OCI-LY7 (cell line): ENCODE measurements at regions of chr12 and their contacts with region 1.

Region 1: GRCh38 chr12:104456417-104456949 is at the start of gene CHST11:
- DNase-seq: peak; percentile 92
- H3K4me3 ChIP-seq: peak within 1 kb of the TSS; percentile 79
- H3K27ac ChIP-seq: peak within 1 kb of the TSS; percentile 64
- H3K4me1 ChIP-seq: peaks cover 41% of the 10 kb centered on the region
- CTCF ChIP-seq: peak; percentile 59
- total RNA-seq, gene CHST11: 35.8 and 41.6 TPM in 2 replicates

Region 2: GRCh38 chr12:104189915-104190555 is 266.4 kb before region 1 on chr12:
- CTCF ChIA-PET with region 1: no interaction called
- POLR2A ChIA-PET with region 1: no interaction called
- intact Hi-C with region 1: no loop called
- DNase-seq: no peak
- H3K4me3 ChIP-seq: no peak overlapping the region
- H3K27ac ChIP-seq: no peak overlapping the region
- H3K4me1 ChIP-seq: no peaks in the 10 kb centered on the region
- CTCF ChIP-seq: no peak

Region 3: DNA sequence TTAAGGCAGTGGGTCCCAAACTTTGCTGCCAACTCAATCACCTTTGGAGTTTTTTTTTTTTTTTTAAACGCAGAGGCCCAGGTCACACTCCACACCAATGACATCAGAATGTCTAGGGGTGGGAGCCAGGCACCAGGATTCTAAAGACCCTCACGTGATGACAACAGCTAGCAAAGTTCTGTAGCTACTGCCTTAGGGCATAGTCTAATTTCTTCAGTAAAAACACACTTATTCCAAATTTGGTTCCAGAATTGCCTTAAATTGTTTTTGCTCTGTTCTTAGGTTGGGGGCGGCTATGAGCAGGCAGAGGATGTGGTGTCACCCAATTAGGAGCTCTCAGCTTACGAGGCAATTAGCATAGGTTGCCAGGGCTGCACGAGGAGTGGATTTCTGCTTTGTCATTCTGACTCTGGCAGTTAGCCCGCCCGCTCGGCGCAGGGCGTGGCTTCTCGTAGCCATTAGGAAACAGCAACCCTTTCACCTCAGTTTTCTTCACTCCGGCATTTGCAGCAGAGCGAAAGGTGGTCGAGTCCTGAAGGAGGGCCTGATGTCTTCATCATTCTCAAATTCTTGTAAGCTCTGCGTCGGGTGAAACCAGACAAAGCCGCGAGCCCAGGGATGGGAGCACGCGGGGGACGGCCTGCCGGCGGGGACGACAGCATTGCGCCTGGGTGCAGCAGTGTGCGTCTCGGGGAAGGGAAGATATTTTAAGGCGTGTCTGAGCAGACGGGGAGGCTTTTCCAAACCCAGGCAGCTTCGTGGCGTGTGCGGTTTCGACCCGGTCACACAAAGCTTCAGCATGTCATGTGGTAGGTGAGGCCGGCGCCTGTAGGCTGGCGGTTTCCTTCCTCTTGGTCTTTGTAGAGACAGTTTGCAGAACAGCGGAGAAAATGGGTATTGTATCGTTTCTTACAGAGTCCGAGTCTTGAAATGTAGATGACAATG is 169.7 kb before region 1 on chr12:
- CTCF ChIA-PET with region 1: no interaction called
- POLR2A ChIA-PET with region 1: no interaction called
- intact Hi-C with region 1: loop called (anchors 5 kb)
- DNase-seq: peak; percentile 98
- H3K4me3 ChIP-seq: peak overlapping the region; percentile 99
- H3K27ac ChIP-seq: peak overlapping the region; percentile 95
- H3K4me1 ChIP-seq: peaks cover 27% of the 10 kb centered on the region
- CTCF ChIP-seq: 0 out of 2 replicates have a peak, but pooled peaks have one; percentile 18

Region 4: DNA sequence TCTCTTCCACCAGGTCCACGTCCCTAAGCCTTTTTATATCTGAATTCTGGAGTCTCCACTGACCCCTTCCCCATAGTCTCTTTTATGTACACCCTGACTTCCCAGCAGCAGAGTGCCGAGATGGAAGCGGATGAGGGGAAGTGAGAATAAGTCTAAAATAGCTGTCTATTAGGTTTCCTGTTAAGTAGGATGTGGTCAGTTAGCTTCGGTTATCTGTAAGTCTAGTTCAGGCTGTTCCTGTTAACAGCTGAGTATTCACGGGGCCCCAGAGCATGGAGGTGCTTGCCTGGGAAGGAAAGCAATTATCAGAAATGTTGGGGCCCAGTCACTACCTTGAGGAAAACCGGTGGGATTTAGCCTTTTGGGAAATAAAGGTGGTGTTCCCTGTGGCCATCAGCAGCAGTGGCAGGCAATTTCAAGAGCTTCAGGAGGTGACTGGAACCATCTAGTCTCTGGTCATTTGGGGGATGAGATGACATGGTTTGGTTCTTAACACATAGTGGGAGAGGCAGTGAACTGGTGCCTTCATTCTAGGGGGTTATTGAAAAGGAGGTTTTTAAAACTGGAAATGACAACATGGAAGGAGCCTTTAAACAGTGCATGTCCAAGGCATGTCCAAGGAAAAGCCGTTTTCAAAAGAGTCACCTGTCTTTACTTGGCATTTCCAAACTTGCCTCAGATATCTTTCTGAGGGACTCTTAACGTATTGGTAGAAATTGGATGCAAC is 22.1 kb after region 1 on chr12:
- CTCF ChIA-PET with region 1: interaction called, 3 read pairs
- POLR2A ChIA-PET with region 1: interaction called, 26 read pairs
- intact Hi-C with region 1: loop called (anchors 2 kb)
- DNase-seq: peak; percentile 90
- H3K4me3 ChIP-seq: peak overlapping the region; percentile 61
- H3K27ac ChIP-seq: peak overlapping the region; percentile 87
- H3K4me1 ChIP-seq: peaks cover 88% of the 10 kb centered on the region
- CTCF ChIP-seq: no peak

Region 5: DNA sequence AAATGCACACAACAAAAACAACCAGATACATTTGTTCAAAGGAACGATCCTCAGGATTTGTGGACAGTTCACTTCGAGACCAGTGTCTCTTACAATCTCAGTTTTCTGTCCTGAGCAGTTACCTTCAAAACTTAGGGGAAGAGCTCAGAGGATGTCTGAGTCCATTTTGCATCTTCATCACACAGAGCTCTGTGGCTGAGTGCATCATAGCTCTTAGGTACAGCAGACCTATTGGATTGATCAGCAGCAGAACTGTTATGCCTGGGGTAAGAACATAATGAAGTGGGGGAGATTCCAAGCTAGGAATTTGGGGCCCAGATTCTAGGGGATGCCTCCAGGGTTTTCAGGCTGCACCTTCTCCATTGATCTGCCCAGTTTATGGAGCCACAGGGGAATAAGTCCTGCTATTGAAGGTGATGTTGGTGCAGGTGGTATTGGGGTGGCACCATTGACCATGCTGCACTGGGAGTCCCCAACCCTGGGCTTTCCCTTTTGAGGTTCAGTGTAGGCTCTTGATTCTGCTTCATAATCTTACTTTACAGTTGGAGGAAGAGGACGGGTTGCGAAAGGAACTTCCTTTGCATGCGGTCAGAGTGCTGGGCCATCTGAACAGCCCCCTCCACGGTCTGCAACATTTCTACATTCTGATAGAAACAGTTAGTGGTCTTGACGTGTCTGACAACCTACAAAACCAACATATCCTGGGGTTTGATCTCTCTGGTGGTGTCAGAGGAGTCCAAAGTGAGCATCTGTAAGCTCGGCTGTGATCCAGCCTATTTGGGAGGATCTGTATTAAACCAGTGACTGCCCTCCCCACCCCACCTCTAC is 113.1 kb after region 1 on chr12:
- CTCF ChIA-PET with region 1: no interaction called
- POLR2A ChIA-PET with region 1: no interaction called
- intact Hi-C with region 1: loop called (anchors 5 kb)
- DNase-seq: peak; percentile 39
- H3K4me3 ChIP-seq: peak overlapping the region; percentile 16
- H3K27ac ChIP-seq: peak overlapping the region; percentile 54
- H3K4me1 ChIP-seq: peaks cover 37% of the 10 kb centered on the region
- CTCF ChIP-seq: no peak

Region 6: GRCh38 chr12:104596134-104596799 is 139.8 kb after region 1 on chr12:
- CTCF ChIA-PET with region 1: no interaction called
- POLR2A ChIA-PET with region 1: interaction called, 3 read pairs
- intact Hi-C with region 1: loop called (anchors 5 kb)
- DNase-seq: no peak
- H3K4me3 ChIP-seq: no peak overlapping the region
- H3K27ac ChIP-seq: no peak overlapping the region
- H3K4me1 ChIP-seq: peaks cover 60% of the 10 kb centered on the region
- CTCF ChIP-seq: no peak

Region 7: DNA sequence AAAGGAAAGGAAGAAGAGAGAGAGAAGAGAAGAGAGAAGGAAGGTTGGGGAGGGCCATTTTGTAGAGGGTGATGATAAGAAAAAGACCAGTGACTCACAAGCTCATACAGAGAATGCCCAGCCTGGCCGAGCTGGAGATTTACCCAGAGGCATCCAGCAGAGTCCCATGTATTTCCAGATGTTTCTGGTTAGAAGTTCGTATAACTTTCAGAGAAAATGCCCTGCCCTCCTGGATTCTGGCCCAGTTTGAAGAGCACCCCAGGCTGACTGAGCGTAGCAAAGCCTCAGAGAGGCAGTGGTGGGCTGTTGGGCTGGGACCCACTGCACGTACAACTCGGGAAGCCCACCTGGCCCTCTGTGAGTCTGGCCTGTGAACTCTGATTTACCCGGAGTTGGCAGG is 279.8 kb after region 1 on chr12:
- CTCF ChIA-PET with region 1: no interaction called
- POLR2A ChIA-PET with region 1: no interaction called
- intact Hi-C with region 1: loop called (anchors 5 kb)
- DNase-seq: no peak
- H3K4me3 ChIP-seq: no peak overlapping the region
- H3K27ac ChIP-seq: no peak overlapping the region
- H3K4me1 ChIP-seq: peaks cover 13% of the 10 kb centered on the region
- CTCF ChIP-seq: no peak

Region 8: GRCh38 chr12:104858611-104859543 is 402.4 kb after region 1 on chr12:
- CTCF ChIA-PET with region 1: no interaction called
- POLR2A ChIA-PET with region 1: no interaction called
- intact Hi-C with region 1: no loop called
- DNase-seq: no peak
- H3K4me3 ChIP-seq: no peak overlapping the region
- H3K27ac ChIP-seq: no peak overlapping the region
- H3K4me1 ChIP-seq: no peaks in the 10 kb centered on the region
- CTCF ChIP-seq: no peak

Region 9: DNA sequence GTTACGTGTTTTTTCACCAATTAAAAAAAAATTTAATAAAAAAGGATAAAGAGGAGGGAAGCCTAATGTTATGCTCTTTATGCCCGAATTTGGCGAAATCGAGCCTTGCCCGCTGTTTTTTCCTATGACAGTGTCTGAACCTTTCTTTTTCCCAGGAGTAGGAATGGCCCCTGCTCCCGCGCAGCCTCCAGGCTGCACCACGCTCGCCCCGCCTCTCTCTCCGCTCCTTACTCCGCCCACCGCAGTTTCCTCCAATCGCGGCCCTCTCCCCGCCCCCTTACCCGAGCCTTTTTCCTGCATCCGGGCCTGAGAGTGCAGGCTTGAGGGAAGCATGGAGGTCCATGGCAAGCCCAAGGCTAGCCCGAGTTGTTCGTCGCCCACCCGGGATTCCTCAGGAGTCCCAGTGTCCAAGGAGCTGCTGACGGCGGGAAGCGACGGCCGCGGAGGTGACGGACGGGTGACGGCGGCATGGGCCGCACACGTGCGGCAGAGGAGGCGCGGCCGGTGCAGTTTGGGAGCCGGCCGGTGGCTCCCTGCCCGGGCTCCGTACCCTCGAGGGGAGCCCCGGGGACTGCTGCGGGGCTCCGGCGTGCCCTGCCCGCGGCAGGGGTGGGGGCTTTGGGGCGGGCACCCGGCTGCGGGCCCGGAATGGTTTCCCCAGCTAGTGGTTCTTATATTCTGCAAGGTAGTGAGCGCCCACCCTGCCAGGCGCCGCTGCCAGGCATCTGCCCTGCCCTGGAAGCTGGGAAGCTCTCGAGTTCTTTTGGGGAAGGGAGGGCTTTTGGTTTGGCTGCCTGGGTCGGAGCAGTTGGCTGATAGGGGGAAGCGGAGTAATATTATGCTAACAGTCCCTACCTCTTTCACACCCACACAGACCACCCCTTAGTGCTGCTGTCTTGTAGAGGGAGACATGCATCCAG is 529.8 kb after region 1 on chr12 and contains the start of gene NOPCHAP1:
- CTCF ChIA-PET with region 1: no interaction called
- POLR2A ChIA-PET with region 1: no interaction called
- intact Hi-C with region 1: loop called (anchors 10 kb)
- DNase-seq: peak; percentile 86
- H3K4me3 ChIP-seq: peak within 1 kb of the TSS; percentile 78
- H3K27ac ChIP-seq: no peak within 1 kb of the TSS
- H3K4me1 ChIP-seq: peaks cover 33% of the 10 kb centered on the region
- CTCF ChIP-seq: no peak
- total RNA-seq, gene NOPCHAP1: 12.1 and 15.2 TPM in 2 replicates